ENCODE measurements at regions of chr9 and their contacts with region 1.

Region 1: DNA sequence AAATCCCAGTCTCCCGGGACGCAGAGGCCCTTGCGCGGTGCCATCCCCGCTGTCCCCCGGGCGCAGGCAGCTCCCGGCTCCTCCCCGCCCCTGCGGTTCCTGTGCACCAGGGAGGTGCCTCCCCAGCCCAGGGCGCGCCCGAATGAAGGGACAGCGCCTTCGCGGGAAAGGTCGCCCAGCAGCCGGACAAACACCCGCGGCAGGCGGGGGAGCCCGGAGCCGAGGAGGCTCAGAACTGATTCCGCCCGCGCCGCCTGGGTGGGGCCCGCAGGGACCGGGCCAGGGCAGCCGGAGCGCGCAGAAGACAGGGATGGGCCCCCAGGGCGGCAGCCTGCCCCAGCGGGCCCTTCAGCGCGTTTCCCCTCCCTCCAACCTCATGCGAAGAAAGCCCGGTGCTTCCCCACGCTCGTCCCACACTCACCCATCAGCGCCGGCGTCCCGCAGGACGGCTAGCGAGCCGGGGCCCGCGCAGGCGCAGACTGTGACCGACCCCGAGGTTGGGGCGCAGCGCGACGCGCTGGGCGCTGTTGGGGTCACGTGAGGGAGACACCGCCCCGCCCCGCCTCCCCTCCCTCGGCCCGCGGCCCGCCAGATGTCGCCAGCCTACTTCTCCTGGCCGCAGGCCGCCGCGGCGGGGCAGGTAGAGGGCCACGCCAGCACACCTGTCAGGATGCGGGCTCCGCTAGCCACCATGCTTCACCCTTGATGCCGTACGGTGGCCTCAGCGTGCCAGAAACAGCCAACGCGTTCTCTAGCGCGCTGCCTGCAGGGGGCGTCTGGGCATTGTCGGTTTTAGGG is at the start of gene SLC25A51:
- DNase-seq: peak; percentile 97 to 98
- ATAC-seq: peak; percentile 86 to 94 (median 88)
- H3K4me3 ChIP-seq: peak within 1 kb of the TSS; percentile 58
- H3K4me3 Mint-ChIP-seq: peak within 1 kb of the TSS; percentile 94
- H3K27ac ChIP-seq: peak within 1 kb of the TSS; percentile 78
- H3K27ac Mint-ChIP-seq: peak within 1 kb of the TSS; percentile 86 to 94
- H3K4me1 ChIP-seq: peaks cover 17% of the 10 kb centered on the region
- H3K4me1 Mint-ChIP-seq: peaks cover 17 to 33% of the 10 kb centered on the region in 2 donors
- H3K27me3 ChIP-seq: no peaks in the 10 kb centered on the region
- H3K27me3 Mint-ChIP-seq: no peaks in the 10 kb centered on the region
- CTCF ChIP-seq: peak; percentile 89
- total RNA-seq, gene SLC25A51: 22.2 to 35.4 (median 33.7) TPM

Region 2: GRCh38 chr9:38362852-38363593 is 459.2 kb after region 1 on chr9:
- intact Hi-C with region 1: loop called (anchors 2 kb)
- DNase-seq: peak in 1 of 2 donors; percentile 61
- ATAC-seq: peak; percentile 68 to 89 (median 89)
- H3K4me3 ChIP-seq: no peak overlapping the region
- H3K4me3 Mint-ChIP-seq: peak overlapping the region; percentile 75
- H3K27ac ChIP-seq: no peak overlapping the region
- H3K27ac Mint-ChIP-seq: peak overlapping the region in 1 of 2 donors; percentile 72
- H3K4me1 ChIP-seq: peaks cover 3% of the 10 kb centered on the region
- H3K4me1 Mint-ChIP-seq: peaks cover 7 to 8% of the 10 kb centered on the region in 2 donors
- H3K27me3 ChIP-seq: no peaks in the 10 kb centered on the region
- H3K27me3 Mint-ChIP-seq: peaks cover 4 to 13% of the 10 kb centered on the region in 2 donors
- CTCF ChIP-seq: peak; percentile 51

Measured in natural killer cell (primary cell).